ENCODE measurements at regions of chr11 and their contacts with region 1.

Region 1: GRCh38 chr11:113896156-113896879 is 8.3 kb upstream of the HTR3B start:
- DNase-seq: peak in 2 of 5 donors; percentile 23 to 39
- ATAC-seq: peak; percentile 63 to 74 (median 70)
- H3K4me3 ChIP-seq: no peak overlapping the region
- H3K27ac ChIP-seq: no peak overlapping the region
- H3K4me1 ChIP-seq: peaks cover 0 to 15% (median 0%) of the 10 kb centered on the region in 12 donors
- H3K27me3 ChIP-seq: no peaks in the 10 kb centered on the region
- CTCF ChIP-seq: peak; percentile 55 to 81 (median 71)
- POLR2A ChIP-seq: no peak

Region 2: DNA sequence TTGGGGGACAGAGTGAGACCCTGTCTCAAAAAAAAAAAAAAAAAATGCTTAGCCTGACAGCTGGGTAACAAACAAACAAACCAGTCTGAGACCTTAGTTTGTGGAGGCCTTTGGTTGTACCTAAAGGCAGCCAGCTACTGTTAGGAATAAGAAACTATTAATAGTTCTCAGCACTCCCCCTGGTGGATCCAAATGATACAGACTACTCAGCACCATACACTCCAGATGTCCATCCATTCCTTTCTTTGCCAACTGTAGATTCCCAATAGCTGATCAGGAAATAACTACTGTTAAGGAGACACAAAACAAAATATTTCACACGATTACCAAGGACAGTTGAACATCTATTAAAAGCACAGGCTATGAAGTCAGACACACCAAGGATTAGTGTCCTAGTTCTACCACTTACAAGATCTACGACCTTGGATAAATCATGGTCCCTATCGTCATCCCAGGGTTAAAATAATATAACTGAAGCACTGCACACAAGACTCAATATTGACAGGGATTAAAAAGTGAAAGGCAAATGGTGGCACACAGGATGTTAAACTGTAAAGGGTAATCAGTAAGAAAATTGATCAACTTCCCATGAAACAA is 99.6 kb before region 1 on chr11:
- intact Hi-C with region 1: no loop called
- DNase-seq: no peak
- ATAC-seq: peak; percentile 84 to 92 (median 90)
- H3K4me3 ChIP-seq: no peak overlapping the region
- H3K27ac ChIP-seq: no peak overlapping the region
- H3K4me1 ChIP-seq: peaks cover 0 to 5% (median 0%) of the 10 kb centered on the region in 12 donors
- H3K27me3 ChIP-seq: no peaks in the 10 kb centered on the region
- CTCF ChIP-seq: peak; percentile 47 to 73 (median 59)
- POLR2A ChIP-seq: no peak

Region 3: DNA sequence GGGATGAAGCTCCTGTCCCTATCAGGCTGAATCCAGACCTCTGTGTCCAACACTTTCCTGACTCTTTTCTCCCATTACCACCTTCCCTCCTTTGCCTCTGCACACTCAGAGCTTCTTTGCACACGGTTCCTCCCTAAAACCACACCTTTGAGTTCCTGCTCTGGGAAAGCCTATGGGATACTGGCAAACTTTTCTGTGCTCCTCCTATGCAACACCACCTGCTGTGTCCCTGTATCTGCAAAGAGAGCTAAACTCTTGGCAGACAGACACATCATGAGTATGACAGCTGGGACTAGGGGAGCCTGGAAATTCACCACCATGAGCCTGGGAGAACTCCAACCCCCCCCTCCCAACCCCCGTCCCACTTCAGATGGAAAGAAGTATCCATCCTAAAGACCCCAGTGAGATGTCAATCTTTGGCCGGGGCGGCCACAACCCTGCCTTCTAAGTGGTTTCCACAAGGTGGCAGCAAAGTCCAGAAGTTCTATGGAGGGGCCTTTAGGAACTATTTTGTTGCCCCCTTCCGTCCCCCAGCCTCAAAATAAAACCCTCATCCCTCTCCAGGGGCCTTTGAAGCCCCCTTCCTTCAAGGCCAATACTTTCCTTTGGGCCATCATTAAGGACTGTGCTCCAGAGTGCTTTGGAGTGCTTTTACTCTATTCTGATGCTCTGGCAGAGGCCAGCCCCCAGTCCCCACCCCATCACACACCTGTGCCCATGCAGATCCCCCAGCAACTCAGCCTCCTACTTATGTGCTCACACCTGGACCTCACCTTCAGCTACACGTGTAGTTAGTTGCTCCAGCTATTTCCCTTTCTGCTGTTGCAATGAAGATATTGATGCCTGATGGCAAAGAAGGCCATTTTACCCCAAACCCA is 98.0 kb after region 1 on chr11:
- intact Hi-C with region 1: loop called in 5 of 10 experiments (anchors 2 to 10 kb)
- DNase-seq: no peak
- ATAC-seq: peak in 1 of 4 donors; percentile 56
- H3K4me3 ChIP-seq: no peak overlapping the region
- H3K27ac ChIP-seq: no peak overlapping the region
- H3K4me1 ChIP-seq: no peaks in the 10 kb centered on the region
- H3K27me3 ChIP-seq: peaks cover 0 to 39% (median 8%) of the 10 kb centered on the region in 9 donors
- CTCF ChIP-seq: peak; percentile 52 to 74 (median 68)
- POLR2A ChIP-seq: no peak

Region 4: DNA sequence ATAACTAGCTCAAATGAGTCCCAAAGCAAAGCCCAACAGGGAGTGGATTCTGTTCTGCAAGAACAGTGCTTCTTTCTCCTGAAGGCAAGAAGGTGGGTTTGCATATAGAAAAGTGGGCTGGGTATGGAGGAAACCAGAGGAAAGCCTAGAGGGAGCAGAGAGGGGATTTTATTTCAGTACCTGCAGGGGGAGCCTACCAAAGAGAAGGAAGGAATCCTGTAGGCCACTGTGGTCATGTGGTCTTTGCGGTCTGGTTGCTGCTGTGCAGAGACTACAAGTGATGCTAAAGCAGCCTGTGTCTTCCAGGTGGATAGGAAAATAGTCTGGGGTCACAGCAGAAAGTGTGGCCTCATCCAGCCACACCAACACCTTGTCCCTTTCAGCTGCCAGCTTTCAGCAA is 130.0 kb after region 1 on chr11:
- intact Hi-C with region 1: loop called in 5 of 10 experiments (anchors 10 kb)
- DNase-seq: no peak
- ATAC-seq: no peak
- H3K4me3 ChIP-seq: no peak overlapping the region
- H3K27ac ChIP-seq: peak overlapping the region in 1 of 12 donors; percentile 63
- H3K4me1 ChIP-seq: peaks cover 0 to 12% (median 0%) of the 10 kb centered on the region in 12 donors
- H3K27me3 ChIP-seq: peaks cover 0 to 3% (median 0%) of the 10 kb centered on the region in 9 donors
- CTCF ChIP-seq: peak in 1 of 12 donors; percentile 4
- POLR2A ChIP-seq: no peak

Measured in heart left ventricle (tissue), 16 donors.